ENCODE measurements at regions of chr3 and their contacts with region 1.

Region 1: GRCh38 chr3:169149349-169149890 is 514.1 kb downstream of the MECOM start:
- DNase-seq: peak; percentile 88
- H3K27ac ChIP-seq: no peak overlapping the region
- CTCF ChIP-seq: peak; percentile 87

Region 2: DNA sequence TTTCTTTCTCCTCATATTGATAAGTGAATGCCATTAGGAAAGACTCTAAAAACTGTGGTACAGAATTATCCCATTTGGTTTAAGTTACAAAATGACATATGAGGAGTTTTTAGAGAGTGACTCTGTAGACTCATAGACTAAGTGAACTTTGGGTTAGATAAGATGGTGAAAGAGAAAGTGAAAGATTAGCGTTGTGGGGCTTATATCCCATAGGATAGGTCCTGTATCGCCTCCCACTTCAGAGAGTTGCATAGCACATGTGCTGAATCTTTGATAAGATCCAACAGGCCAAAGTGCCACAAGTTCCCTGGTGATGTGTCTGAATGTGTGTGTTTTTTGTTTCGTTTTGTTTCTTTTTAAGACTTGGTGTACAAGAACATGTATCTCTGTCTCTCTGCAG is 152.8 kb before region 1 on chr3:
- CTCF ChIA-PET with region 1: no interaction called
- POLR2A ChIA-PET with region 1: no interaction called
- DNase-seq: no peak
- H3K27ac ChIP-seq: no peak overlapping the region
- CTCF ChIP-seq: no peak

Region 3: GRCh38 chr3:169041677-169042171 is 107.7 kb before region 1 on chr3:
- CTCF ChIA-PET with region 1: interaction called, 10 read pairs
- POLR2A ChIA-PET with region 1: no interaction called
- DNase-seq: peak; percentile 55
- H3K27ac ChIP-seq: no peak overlapping the region
- CTCF ChIP-seq: peak; percentile 81

Region 4: GRCh38 chr3:169390271-169391230 is 241.1 kb after region 1 on chr3:
- CTCF ChIA-PET with region 1: interaction called, 16 read pairs
- POLR2A ChIA-PET with region 1: no interaction called
- DNase-seq: peak; percentile 4
- H3K27ac ChIP-seq: no peak overlapping the region
- CTCF ChIP-seq: no peak

Region 5: GRCh38 chr3:169668957-169669681 is 519.7 kb after region 1 on chr3:
- CTCF ChIA-PET with region 1: interaction called, 21 read pairs
- POLR2A ChIA-PET with region 1: no interaction called
- DNase-seq: peak; percentile 60
- H3K27ac ChIP-seq: peak overlapping the region; percentile 27; the same call in 1 of the 2 replicates
- CTCF ChIP-seq: peak; percentile 92